ENCODE measurements at regions of chr1 and their contacts with region 1.

Region 1: DNA sequence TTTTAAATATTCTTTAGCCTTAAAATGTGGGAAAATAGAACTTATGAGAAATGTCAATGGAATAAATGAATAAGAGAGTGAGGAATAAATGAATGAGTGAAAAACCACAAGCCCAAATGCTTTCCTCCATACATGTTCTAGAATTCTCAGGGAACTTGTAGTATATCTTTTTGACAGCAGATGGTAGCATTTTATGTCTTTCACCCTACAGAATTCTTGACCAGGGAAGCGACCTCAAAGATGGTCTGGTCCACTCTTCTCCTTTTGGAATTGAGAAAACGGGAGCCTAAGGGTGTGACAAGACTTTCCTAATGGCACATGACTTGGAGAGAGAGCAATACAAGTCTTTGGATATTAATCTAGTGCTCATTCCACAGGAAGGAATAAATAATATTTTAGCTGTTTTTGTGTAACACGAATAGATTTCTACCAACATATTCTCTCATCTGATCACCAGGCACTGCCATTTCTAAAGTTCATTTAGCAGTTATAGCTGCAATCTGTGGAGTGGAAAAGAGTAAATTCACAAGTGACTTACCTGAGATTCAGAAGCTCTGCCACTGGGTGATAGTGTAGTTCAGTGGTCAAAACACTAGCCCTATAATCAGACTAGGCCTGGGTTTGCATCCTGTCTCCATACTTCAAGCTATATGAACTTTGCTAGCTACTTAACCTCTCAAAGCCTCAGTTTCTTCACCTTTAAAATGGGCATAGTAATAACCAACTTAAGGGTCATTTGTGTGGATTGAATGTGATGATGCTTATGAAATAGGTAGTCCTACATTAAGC is 15.0 kb upstream of the F5 start:
- DNase-seq: no peak
- ATAC-seq: no peak
- H3K4me3 Mint-ChIP-seq: no peak overlapping the region
- H3K27ac Mint-ChIP-seq: no peak overlapping the region
- H3K4me1 Mint-ChIP-seq: peaks cover 30% of the 10 kb centered on the region
- H3K27me3 Mint-ChIP-seq: peaks cover 16% of the 10 kb centered on the region

Region 2: GRCh38 chr1:169473352-169473751 is 127.9 kb before region 1 on chr1:
- CTCF ChIA-PET with region 1: no interaction called
- DNase-seq: no peak
- ATAC-seq: no peak
- H3K4me3 Mint-ChIP-seq: no peak overlapping the region
- H3K27ac Mint-ChIP-seq: no peak overlapping the region
- H3K4me1 Mint-ChIP-seq: peaks cover 6% of the 10 kb centered on the region
- H3K27me3 Mint-ChIP-seq: no peaks in the 10 kb centered on the region

Region 3: GRCh38 chr1:169586395-169587255 is 14.7 kb before region 1 on chr1 and contains the start of gene F5:
- CTCF ChIA-PET with region 1: interaction called, 22 read pairs
- DNase-seq: peak; percentile 88
- ATAC-seq: peak; percentile 98
- H3K4me3 Mint-ChIP-seq: peak within 1 kb of the TSS; percentile 81
- H3K27ac Mint-ChIP-seq: peak within 1 kb of the TSS; percentile 83
- H3K4me1 Mint-ChIP-seq: peaks cover 48% of the 10 kb centered on the region
- H3K27me3 Mint-ChIP-seq: peaks cover 3% of the 10 kb centered on the region
- total RNA-seq, gene F5: 3.1 to 14.0 TPM

Region 4: GRCh38 chr1:169694304-169695075 is 93.2 kb after region 1 on chr1:
- CTCF ChIA-PET with region 1: interaction called, 39 read pairs
- DNase-seq: peak; percentile 75
- ATAC-seq: peak; percentile 62
- H3K4me3 Mint-ChIP-seq: no peak overlapping the region
- H3K27ac Mint-ChIP-seq: peak overlapping the region; percentile 79
- H3K4me1 Mint-ChIP-seq: peaks cover 94% of the 10 kb centered on the region
- H3K27me3 Mint-ChIP-seq: no peaks in the 10 kb centered on the region